ENCODE measurements at regions of chrX and their contacts with region 1.

Region 1: DNA sequence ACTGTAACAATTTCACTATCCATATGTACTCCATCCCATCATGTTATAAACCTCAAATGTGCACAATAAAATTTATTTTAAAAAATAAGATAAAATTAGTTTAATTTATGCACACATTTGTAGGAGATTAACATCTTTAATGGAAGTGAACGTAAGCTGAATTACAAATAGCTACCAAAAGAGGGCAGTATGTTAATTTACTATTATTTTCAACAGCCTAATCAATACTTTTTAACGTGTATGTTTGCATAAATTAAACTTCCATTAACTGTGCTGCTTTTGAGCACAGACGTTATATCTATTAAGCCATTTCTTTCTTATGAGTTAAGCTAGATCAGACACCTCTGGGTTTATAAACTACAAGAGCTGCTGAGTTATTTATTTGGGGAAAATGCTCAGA is 56.5 kb upstream of the PHKA2 start:
- DNase-seq: no peak
- H3K4me3 Mint-ChIP-seq: no peak overlapping the region
- H3K27ac Mint-ChIP-seq: no peak overlapping the region
- H3K4me1 Mint-ChIP-seq: no peaks in the 10 kb centered on the region
- H3K27me3 Mint-ChIP-seq: no peaks in the 10 kb centered on the region
- CTCF ChIP-seq: peak; percentile 17

Region 2: DNA sequence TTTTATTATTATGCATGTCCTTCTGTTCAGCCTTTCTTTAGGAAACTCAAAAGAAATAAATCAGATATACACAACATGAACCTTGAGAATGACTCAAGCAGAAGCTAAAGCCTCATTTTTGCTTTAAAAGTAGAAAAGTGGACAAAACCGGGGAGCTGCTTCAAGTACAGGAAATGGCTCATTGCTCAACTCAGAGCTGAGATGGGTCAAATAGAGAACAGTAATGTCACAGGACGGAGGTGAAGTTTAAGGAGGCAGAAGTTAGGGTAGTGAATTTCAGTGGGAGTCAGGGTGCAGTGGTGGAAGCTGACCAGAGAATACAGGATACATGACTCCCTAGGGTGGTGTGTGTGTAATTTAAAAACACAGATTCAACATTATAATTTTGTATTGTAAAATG is 78.7 kb before region 1 on chrX:
- CTCF ChIA-PET with region 1: no interaction called
- intact Hi-C with region 1: no loop called
- DNase-seq: no peak
- H3K4me3 Mint-ChIP-seq: no peak overlapping the region
- H3K27ac Mint-ChIP-seq: no peak overlapping the region
- H3K4me1 Mint-ChIP-seq: no peaks in the 10 kb centered on the region
- H3K27me3 Mint-ChIP-seq: no peaks in the 10 kb centered on the region
- CTCF ChIP-seq: no peak

Region 3: GRCh38 chrX:19121898-19122640 is 81.7 kb after region 1 on chrX and contains the start of gene ADGRG2:
- CTCF ChIA-PET with region 1: interaction called, 4 read pairs
- intact Hi-C with region 1: loop called (anchors 5 kb)
- DNase-seq: peak; percentile 62
- H3K4me3 Mint-ChIP-seq: peak within 1 kb of the TSS; percentile 28
- H3K27ac Mint-ChIP-seq: no peak within 1 kb of the TSS
- H3K4me1 Mint-ChIP-seq: no peaks in the 10 kb centered on the region
- H3K27me3 Mint-ChIP-seq: peaks cover 62% of the 10 kb centered on the region
- CTCF ChIP-seq: no peak
- total RNA-seq, gene ADGRG2: 0.09 and 0.47 TPM in 2 replicates

Region 4: DNA sequence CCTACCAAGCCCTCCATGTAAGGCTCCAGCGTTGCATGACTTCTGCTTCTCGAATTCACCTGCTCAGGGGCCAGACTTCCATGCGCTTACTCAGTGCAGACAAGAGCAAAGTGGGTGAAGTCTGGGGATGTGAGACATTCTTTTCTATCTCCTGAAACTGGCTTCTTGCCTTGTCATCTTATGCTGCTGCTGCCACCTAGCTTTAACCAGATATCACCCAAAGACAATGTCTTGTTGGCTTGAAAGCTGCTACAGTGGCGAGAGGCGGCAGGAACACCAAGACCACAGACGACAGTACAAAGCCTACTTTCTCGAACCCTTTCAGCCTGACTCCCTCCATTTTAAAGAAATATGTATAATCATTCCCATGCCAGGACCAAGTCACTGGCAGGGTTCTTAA is 185.6 kb after region 1 on chrX:
- CTCF ChIA-PET with region 1: interaction called, 3 read pairs
- intact Hi-C with region 1: loop called (anchors 10 kb)
- DNase-seq: no peak
- H3K4me3 Mint-ChIP-seq: no peak overlapping the region
- H3K27ac Mint-ChIP-seq: no peak overlapping the region
- H3K4me1 Mint-ChIP-seq: no peaks in the 10 kb centered on the region
- H3K27me3 Mint-ChIP-seq: peaks cover 30% of the 10 kb centered on the region
- CTCF ChIP-seq: no peak